Left colon (tissue), 2 donors: ENCODE measurements at regions of chr6 and their contacts with region 1.

Region 1: DNA sequence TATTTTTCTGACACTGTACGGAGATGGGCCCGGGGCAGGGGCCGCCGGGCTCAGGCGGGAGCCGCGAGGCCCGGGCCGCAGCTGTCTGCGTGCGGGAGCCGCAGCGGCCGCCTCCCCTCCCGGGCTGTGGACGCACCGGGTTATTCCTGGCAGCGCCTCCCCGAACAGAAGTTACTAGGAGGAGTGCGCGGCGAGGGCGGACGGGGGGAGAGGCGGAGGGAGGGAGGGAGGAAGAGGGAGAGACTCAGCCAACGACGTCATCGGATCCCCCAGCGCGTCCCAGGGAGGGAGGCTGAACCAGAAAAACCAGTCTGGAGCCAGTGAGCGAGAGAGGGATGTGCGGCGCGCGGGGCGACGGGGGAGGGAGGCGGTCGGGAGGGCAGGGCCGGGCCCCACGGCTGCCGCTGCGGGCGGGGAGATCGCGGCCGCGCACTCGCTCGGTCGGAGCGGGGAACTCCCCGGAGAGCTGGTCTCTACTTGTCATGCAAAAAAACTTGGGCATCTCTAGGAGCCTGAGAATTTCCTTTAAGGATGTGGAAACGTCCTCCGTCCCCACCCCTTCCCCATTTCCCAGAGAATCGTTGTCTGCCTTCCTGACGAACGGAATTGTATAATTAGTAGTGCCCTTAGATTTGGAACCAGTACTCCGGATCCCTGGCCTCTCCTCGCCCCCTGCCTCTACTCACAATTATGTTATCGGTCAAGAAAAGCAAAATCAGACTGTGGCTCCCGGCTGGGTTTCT is 1.4 kb upstream of the HIVEP2 start:
- DNase-seq: peak; percentile 95 to 99
- ATAC-seq: peak; percentile 82

Region 2: GRCh38 chr6:142845624-142846458 is 100.5 kb before region 1 on chr6:
- intact Hi-C with region 1: loop called in 1 of 2 experiments (anchors 10 kb)
- DNase-seq: peak; percentile 89 to 91
- ATAC-seq: peak; percentile 91

Region 3: GRCh38 chr6:143039548-143039947 is 93.2 kb after region 1 on chr6:
- intact Hi-C with region 1: no loop called
- DNase-seq: no peak
- ATAC-seq: no peak

Region 4: GRCh38 chr6:143059663-143060353 is 113.5 kb after region 1 on chr6:
- intact Hi-C with region 1: loop called in 1 of 2 experiments (anchors 10 kb)
- DNase-seq: peak in 1 of 2 donors; percentile 31
- ATAC-seq: peak; percentile 42